GM18951 (cell line): ENCODE measurements at regions of chr12 and their contacts with region 1.

Region 1: GRCh38 chr12:40152783-40153383 is 47.0 kb upstream of the SLC2A13 start:
- POLR2A ChIP-seq: no peak

Region 2: DNA sequence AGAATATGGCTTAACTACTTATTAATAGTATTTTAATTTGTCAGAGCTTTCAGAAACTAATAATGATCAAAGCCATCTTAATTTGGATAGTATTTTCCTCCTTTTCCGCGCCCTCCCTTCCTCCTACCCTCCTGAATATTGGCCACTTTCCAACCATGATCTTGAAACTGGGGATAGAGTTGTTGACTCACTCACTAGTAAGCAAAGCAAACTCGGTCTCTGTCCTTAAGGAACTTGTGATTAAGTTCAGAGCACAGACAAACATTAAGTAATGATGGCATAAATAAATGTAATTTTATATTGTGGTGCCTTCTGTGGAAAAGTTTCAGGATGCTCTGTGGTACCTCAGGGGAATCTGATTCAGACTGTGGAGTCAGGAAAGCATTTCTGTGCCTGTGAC is 147.6 kb after region 1 on chr12:
- in situ Hi-C with region 1: loop called (anchors 10 kb)
- POLR2A ChIP-seq: no peak

Region 3: GRCh38 chr12:40451661-40452060 is 298.8 kb after region 1 on chr12:
- in situ Hi-C with region 1: no loop called
- POLR2A ChIP-seq: no peak